Gastrocnemius medialis (tissue), 4 donors: ENCODE measurements at regions of chr19 and their contacts with region 1.

Region 1: DNA sequence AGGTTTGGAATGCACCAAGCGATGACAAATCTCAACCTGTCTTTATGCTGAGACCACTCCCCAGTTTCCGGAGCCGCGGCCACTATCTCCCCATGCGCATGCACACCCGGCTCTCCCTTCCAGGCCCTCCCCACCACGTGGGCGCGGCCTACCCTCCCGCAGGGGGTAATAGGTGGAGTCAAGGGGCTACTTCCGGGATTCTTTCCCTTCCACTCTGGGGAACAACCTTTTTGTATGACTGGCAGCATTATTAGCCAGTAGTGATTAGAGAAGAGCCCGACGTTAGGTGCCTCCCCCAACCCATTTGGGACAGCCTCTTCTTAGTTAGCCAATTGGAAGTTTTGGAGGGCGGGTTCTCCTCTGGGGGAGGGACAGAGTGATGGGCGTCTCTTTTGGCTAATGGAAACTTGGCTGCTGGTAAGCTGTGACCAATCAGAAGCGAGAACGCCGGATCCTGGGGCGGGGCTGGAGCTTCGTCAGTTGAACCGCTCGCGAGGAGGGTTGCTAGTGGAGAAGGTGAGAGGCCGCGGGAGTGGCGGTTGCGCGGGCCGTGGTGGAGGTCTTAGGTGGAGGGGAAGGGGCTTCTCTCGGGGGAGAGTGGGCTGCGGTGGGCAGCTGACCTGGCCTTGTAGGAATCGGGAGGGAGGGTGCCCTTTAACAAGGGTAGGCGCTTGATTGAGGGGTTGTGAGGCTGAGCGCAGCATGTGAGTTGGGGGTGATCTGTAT is at the start of gene CCDC61:
- DNase-seq: peak; percentile 97 to 98
- ATAC-seq: peak; percentile 100
- H3K4me3 ChIP-seq: peak within 1 kb of the TSS; percentile 74 to 93 (median 86)
- H3K27ac ChIP-seq: peak within 1 kb of the TSS; percentile 83 to 86 (median 85)
- H3K4me1 ChIP-seq: peaks cover 6 to 12% of the 10 kb centered on the region in 2 donors
- H3K27me3 ChIP-seq: peaks cover 0 to 12% (median 4%) of the 10 kb centered on the region in 3 donors
- CTCF ChIP-seq: no peak
- POLR2A ChIP-seq: peak; percentile 76 to 81
- total RNA-seq, gene CCDC61: 2.3 to 4.9 (median 3.4) TPM

Region 2: DNA sequence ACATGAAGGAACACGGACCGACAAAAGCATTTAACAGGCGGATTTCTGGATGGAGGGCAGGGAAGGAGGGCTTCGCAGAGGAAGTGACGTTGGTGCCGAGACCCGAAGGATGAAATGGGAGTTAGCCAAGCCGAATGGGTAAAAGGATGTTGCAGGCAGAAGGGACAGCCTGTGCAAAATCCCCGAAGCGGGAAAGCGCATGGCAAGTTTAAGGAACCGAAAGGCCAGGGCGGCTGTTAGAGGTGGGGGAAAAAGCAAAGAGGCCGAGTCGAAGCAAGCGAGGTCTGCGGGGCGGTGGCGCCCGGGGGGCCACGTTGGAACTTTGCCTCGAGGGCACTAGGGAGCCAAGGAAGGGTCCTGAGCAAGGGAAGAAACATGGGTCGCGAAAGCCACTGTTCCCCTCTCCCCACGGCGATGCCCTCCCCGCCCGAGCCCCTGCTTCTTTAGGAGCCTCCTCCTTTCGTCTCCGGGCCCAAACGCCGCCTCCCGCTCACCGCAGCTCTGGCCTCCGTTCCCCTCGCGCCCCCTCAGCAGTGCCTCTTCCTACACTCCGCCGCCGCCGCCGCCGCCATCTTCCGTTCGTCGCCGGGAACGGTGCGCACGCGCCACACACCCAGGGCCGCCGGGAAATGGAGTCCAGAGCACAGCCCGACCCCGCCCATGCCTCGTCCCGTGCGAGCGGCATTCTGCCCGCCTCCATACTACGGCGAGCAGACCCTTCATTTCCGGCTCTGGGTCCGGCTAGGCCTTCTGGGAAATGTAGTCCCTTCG is 132.4 kb before region 1 on chr19 and contains the start of gene SYMPK:
- in situ Hi-C with region 1: no loop called
- intact Hi-C with region 1: loop called (anchors 2 kb)
- DNase-seq: peak; percentile 98 to 99
- ATAC-seq: peak; percentile 99
- H3K4me3 ChIP-seq: peak within 1 kb of the TSS; percentile 62 to 95 (median 86)
- H3K27ac ChIP-seq: peak within 1 kb of the TSS; percentile 85 to 95 (median 90)
- H3K4me1 ChIP-seq: peaks cover 17 to 22% of the 10 kb centered on the region in 2 donors
- H3K27me3 ChIP-seq: peaks cover 10 to 16% (median 10%) of the 10 kb centered on the region in 3 donors
- CTCF ChIP-seq: no peak
- POLR2A ChIP-seq: peak; percentile 62 to 82
- total RNA-seq, gene SYMPK: 14.1 to 64.6 (median 34.9) TPM

Region 3: DNA sequence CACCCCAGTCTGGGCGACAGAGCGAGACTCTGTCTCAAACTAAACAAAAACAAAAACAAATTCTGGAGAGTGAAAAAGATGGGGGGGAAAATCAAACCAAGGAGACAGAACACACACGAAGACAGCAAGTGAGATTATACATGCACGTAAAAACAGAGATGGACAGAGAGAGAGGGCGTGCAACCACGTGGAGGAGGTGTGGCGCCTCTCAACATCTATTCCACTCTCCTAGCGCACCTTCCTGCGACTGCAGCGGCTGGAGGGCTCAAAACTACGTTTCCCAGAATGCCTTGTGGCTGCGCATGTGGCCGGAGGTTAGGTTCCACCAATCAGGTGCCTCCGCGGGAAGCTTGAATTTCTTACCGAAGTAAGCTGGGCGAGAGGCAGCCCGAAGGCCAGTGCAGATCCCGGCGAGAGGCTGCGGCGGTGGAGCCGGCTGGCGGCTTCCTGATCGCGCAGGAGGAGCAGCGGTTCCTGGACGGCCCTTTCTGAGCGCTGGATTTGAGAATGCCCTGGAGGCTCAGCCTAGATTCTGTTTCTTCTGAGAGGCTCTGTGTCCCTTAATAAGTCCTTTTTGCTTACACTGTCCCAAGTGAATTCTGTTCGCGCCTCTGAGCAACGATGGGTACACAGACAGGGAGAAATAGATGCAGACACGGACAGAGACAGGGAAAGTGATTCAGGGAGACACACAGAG is 67.4 kb before region 1 on chr19:
- in situ Hi-C with region 1: no loop called
- intact Hi-C with region 1: loop called (anchors 1 kb)
- DNase-seq: peak; percentile 84 to 85
- ATAC-seq: peak; percentile 87 to 99
- H3K4me3 ChIP-seq: peak overlapping the region in 2 of 4 donors; percentile 0 to 15
- H3K27ac ChIP-seq: no peak overlapping the region
- H3K4me1 ChIP-seq: peaks cover 0 to 7% of the 10 kb centered on the region in 2 donors
- H3K27me3 ChIP-seq: no peaks in the 10 kb centered on the region
- CTCF ChIP-seq: peak in 1 of 5 experiments; percentile 9
- POLR2A ChIP-seq: no peak